Kidney (tissue), 22 donors: ENCODE measurements at regions of chr14 and their contacts with region 1.

Region 1: GRCh38 chr14:58501214-58501816 is 73.8 kb downstream of the KIAA0586 start:
- DNase-seq: peak in 3 of 5 donors; percentile 35 to 78 (median 74)
- H3K4me3 ChIP-seq: no peak overlapping the region
- H3K27ac ChIP-seq: no peak overlapping the region
- H3K4me1 ChIP-seq: no peaks in the 10 kb centered on the region
- H3K27me3 ChIP-seq: no peaks in the 10 kb centered on the region
- CTCF ChIP-seq: peak; percentile 77

Region 2: GRCh38 chr14:58171090-58171489 is 330.2 kb before region 1 on chr14:
- intact Hi-C with region 1: no loop called
- DNase-seq: peak; percentile 48 to 85 (median 69)
- H3K4me3 ChIP-seq: peak overlapping the region in 1 of 3 donors; percentile 14
- H3K27ac ChIP-seq: peak overlapping the region in 1 of 2 donors; percentile 12
- H3K4me1 ChIP-seq: peaks cover 0 to 2% (median 0%) of the 10 kb centered on the region in 3 donors
- H3K27me3 ChIP-seq: no peaks in the 10 kb centered on the region
- CTCF ChIP-seq: no peak

Region 3: GRCh38 chr14:59067127-59067894 is 566.0 kb after region 1 on chr14:
- intact Hi-C with region 1: loop called (anchors 10 kb)
- DNase-seq: peak in 1 of 5 donors; percentile 25
- H3K4me3 ChIP-seq: no peak overlapping the region
- H3K27ac ChIP-seq: no peak overlapping the region
- H3K4me1 ChIP-seq: peaks cover 0 to 2% (median 0%) of the 10 kb centered on the region in 3 donors
- H3K27me3 ChIP-seq: no peaks in the 10 kb centered on the region
- CTCF ChIP-seq: no peak

Region 4: DNA sequence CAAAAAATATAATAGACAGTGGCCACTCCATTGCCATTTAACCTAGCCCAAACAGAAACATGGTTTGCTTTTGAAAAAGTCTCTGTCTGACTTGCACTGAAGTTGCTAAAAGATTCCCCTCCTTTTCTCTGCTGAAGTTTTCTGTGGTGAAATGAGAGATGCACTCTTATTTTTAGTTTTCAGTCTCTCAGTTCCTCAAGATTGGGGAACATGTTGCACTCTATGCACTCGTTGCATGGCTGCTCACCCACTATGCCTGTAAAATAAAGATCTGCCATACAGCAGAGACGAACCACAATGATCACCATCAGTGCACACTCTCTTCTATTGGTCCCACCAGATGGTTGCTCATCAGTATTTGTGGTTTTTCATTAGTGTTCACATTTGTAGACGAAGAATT is 674.1 kb after region 1 on chr14:
- intact Hi-C with region 1: no loop called
- DNase-seq: no peak
- H3K4me3 ChIP-seq: no peak overlapping the region
- H3K27ac ChIP-seq: no peak overlapping the region
- H3K4me1 ChIP-seq: no peaks in the 10 kb centered on the region
- H3K27me3 ChIP-seq: no peaks in the 10 kb centered on the region
- CTCF ChIP-seq: no peak